ENCODE measurements at regions of chr21 and their contacts with region 1.

Region 1: GRCh38 chr21:17387030-17387617 is 125.7 kb upstream of the CXADR start:
- DNase-seq: peak; percentile 45
- ATAC-seq: peak; percentile 39
- H3K4me3 Mint-ChIP-seq: no peak overlapping the region
- H3K27ac Mint-ChIP-seq: no peak overlapping the region
- H3K4me1 Mint-ChIP-seq: no peaks in the 10 kb centered on the region
- H3K27me3 Mint-ChIP-seq: peaks cover 2% of the 10 kb centered on the region

Region 2: GRCh38 chr21:17397703-17398102 is 10.6 kb after region 1 on chr21:
- CTCF ChIA-PET with region 1: no interaction called
- DNase-seq: no peak
- ATAC-seq: no peak
- H3K4me3 Mint-ChIP-seq: no peak overlapping the region
- H3K27ac Mint-ChIP-seq: no peak overlapping the region
- H3K4me1 Mint-ChIP-seq: no peaks in the 10 kb centered on the region
- H3K27me3 Mint-ChIP-seq: peaks cover 3% of the 10 kb centered on the region

Region 3: GRCh38 chr21:17585875-17586450 is 198.8 kb after region 1 on chr21:
- CTCF ChIA-PET with region 1: interaction called, 57 read pairs
- DNase-seq: no peak
- ATAC-seq: no peak
- H3K4me3 Mint-ChIP-seq: no peak overlapping the region
- H3K27ac Mint-ChIP-seq: no peak overlapping the region
- H3K4me1 Mint-ChIP-seq: no peaks in the 10 kb centered on the region
- H3K27me3 Mint-ChIP-seq: peaks cover 2% of the 10 kb centered on the region

Region 4: DNA sequence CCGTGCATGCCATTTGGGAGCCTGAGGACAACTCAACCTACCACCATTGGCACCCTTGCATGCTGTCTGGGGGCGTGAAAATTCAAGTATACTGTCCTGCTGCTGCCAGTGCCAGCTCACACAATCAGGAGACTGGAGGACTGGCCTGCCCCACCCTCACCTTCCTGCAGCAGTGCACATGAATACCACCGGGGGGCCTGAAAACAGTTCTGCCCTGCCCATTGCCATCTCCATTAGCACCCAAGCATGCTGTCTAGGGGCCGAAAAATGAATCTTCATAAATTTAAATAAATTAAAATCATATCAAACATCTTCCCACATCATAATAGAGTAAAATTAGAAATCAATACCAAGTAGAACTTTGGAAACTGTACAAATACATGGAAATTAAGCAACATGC is 1338.5 kb after region 1 on chr21:
- CTCF ChIA-PET with region 1: no interaction called
- DNase-seq: no peak
- ATAC-seq: no peak
- H3K4me3 Mint-ChIP-seq: no peak overlapping the region
- H3K27ac Mint-ChIP-seq: no peak overlapping the region
- H3K4me1 Mint-ChIP-seq: no peaks in the 10 kb centered on the region
- H3K27me3 Mint-ChIP-seq: no peaks in the 10 kb centered on the region